Activated CD8-positive, alpha-beta memory T cell treated with anti-CD3 and anti-CD28 coated beads, Interleukin-2, amount 10 ng/mL, durations not matched to agents 7 days and 5 days (primary cell): ENCODE measurements at regions of chr5 and their contacts with region 1.

Region 1: GRCh38 chr5:142881076-142881783 is 111.1 kb downstream of the ARHGAP26 start:
- DNase-seq: no peak
- ATAC-seq: peak; percentile 16
- H3K4me3 Mint-ChIP-seq: no peak overlapping the region
- H3K27ac Mint-ChIP-seq: no peak overlapping the region
- H3K4me1 Mint-ChIP-seq: peaks cover 7% of the 10 kb centered on the region
- H3K27me3 Mint-ChIP-seq: no peaks in the 10 kb centered on the region

Region 2: DNA sequence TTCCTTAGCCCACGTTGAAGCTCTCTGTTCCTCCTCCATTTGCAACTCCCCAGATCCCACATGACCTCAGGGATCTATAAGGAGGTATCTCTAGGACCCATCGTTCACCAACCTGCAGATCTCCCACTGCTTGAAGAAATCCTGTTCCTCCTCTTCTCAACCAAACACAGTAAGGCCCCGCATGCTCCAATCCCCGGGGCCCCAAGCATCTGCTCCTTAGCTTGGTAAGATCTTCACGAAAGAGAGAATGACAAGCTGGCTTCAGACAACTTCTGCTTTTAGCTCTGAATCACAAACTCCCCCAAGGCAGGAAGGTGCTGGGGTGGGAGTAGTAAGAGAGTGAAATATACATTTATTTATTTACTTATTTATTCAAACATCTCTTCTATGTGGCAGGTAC is 144.1 kb before region 1 on chr5:
- CTCF ChIA-PET with region 1: interaction called, 11 read pairs
- DNase-seq: no peak
- ATAC-seq: no peak
- H3K4me3 Mint-ChIP-seq: no peak overlapping the region
- H3K27ac Mint-ChIP-seq: no peak overlapping the region
- H3K4me1 Mint-ChIP-seq: peaks cover 18% of the 10 kb centered on the region
- H3K27me3 Mint-ChIP-seq: peaks cover 4% of the 10 kb centered on the region

Region 3: DNA sequence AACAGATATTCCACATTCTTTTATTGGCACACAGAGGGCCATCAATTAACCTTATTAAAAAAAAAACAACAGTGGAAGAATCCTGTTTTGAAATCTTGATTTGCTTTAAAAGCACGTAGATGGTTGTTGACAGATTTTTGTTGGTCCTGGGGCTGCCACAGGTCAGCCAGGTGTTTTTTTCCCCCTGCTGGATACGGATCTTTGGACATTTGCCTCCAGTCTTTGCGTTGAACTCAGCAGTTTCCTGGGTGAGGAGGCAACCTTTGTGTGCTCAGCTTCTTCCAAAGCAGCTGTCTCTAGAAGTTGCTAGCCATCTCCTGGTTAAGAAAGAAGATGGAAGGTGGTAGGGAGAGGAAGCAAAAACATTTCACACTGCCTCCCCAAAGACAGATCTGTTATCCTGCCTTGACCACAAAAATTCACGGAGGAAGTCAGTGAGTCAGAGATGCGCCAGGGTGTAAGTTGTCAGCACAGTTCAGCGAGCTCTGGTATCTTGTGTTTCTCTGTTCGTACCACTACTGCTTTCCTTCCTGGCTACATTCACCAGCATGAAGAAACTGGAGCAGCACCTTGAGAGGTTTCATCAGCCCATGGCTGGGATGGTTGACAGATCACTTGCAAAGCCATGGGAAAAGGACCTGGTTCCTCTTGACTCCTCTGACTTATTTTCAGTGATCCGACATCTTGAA is 96.3 kb after region 1 on chr5:
- CTCF ChIA-PET with region 1: no interaction called
- DNase-seq: peak; percentile 74
- ATAC-seq: peak; percentile 89
- H3K4me3 Mint-ChIP-seq: peak overlapping the region; percentile 32
- H3K27ac Mint-ChIP-seq: peak overlapping the region; percentile 86
- H3K4me1 Mint-ChIP-seq: peaks cover 64% of the 10 kb centered on the region
- H3K27me3 Mint-ChIP-seq: no peaks in the 10 kb centered on the region